ENCODE measurements at regions of chr11 and their contacts with region 1.

Region 1: GRCh38 chr11:65354265-65355012 is at the start of gene TIGD3:
- DNase-seq: peak; percentile 97 to 98 (median 97)
- ATAC-seq: peak; percentile 86 to 93 (median 90)
- H3K4me3 ChIP-seq: peak within 1 kb of the TSS; percentile 52 to 65 (median 64)
- H3K27ac ChIP-seq: peak within 1 kb of the TSS in 1 of 3 donors; percentile 18
- H3K4me1 ChIP-seq: peaks cover 0 to 35% (median 10%) of the 10 kb centered on the region in 4 donors
- H3K27me3 ChIP-seq: no peaks in the 10 kb centered on the region
- CTCF ChIP-seq: no peak
- POLR2A ChIP-seq: peak; percentile 71
- total RNA-seq, gene TIGD3: 0.10 to 0.28 (median 0.20) TPM in 3 of 6 experiments, not detected in the others

Region 2: DNA sequence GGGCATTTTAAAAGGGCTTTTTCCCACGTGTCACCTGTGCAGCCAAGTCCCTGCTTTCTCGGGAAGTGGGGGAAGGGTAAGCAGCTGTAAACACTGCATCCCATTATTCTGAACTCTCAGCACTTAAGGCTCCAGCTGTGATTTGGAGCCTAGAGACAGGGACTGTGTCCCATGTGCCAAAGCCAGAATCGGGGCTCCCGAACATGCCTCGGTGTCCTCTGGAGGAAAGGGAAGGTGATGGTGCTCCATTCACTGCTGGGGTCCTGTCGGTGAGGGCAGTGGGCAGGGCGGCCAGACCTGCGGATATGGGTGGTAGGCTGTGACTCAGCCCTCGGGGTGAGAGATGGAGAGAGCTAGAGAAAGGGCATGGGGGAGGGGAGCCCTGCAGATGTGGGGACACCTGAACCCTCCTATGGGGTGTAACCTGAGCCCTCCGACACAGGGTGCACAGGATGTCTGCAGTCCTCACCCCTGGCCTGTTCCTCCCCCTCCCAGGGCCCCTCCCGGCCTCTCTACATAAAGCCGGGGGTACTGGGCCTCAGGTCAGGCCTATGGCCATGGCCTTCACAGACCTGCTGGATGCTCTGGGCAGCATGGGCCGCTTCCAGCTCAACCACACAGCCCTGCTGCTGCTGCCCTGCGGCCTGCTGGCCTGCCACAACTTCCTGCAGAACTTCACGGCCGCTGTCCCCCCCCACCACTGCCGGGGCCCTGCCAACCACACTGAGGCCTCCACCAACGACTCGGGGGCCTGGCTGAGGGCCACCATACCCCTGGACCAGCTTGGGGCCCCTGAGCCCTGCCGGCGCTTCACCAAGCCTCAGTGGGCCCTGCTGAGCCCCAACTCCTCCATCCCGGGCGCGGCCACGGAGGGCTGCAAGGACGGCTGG is 140.9 kb before region 1 on chr11:
- intact Hi-C with region 1: no loop called
- DNase-seq: peak in 1 of 3 donors; percentile 47
- ATAC-seq: peak in 1 of 4 donors; percentile 7
- H3K4me3 ChIP-seq: no peak overlapping the region
- H3K27ac ChIP-seq: no peak overlapping the region
- H3K4me1 ChIP-seq: peaks cover 0 to 28% (median 10%) of the 10 kb centered on the region in 4 donors
- H3K27me3 ChIP-seq: no peaks in the 10 kb centered on the region
- CTCF ChIP-seq: no peak
- POLR2A ChIP-seq: no peak

Region 3: DNA sequence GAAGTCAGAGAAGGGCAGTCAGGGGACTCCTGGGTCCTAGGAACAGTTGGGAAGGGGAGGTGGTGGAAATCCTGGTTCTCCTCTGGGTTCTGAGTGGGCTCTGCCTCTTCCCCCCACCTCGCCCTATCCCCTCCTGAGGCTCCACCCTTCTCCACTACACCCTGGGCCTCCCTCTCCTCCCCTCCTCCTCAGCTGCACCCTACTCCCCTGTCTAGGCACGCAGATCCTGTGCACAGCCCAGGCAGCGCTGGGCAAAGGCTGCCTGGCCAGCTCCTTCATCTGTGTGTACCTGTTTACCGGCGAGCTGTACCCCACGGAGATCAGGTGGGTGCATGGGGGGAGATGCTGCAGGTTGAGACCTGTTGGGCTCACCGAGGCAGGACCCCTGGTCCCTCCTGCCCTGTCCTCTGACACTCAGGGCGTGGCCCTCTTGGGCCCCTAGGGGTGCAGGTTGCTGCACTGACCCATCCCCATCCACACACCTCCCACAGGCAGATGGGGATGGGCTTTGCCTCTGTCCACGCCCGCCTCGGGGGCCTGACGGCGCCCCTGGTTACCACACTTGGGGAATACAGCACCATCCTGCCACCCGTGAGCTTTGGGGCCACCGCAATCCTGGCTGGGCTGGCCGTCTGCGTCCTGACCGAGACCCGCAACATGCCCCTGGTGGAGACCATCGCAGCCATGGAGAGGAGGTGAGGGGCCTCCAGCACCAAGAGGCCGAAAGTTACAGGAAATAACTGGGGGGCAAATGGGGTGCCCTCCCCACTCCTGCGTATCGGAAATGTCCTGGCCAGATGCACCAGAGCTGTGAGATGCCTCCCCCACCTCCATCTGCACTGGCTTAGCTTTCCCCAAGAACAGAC is 118.0 kb before region 1 on chr11:
- intact Hi-C with region 1: no loop called
- DNase-seq: peak in 1 of 3 donors; percentile 19
- ATAC-seq: peak in 1 of 4 donors; percentile 40
- H3K4me3 ChIP-seq: no peak overlapping the region
- H3K27ac ChIP-seq: no peak overlapping the region
- H3K4me1 ChIP-seq: no peaks in the 10 kb centered on the region
- H3K27me3 ChIP-seq: no peaks in the 10 kb centered on the region
- CTCF ChIP-seq: no peak
- POLR2A ChIP-seq: no peak

Region 4: GRCh38 chr11:65391007-65391406 is 36.6 kb after region 1 on chr11:
- intact Hi-C with region 1: loop called in 1 of 2 experiments (anchors 5 kb)
- DNase-seq: peak in 1 of 3 donors; percentile 54
- ATAC-seq: peak; percentile 31 to 61 (median 36)
- H3K4me3 ChIP-seq: no peak overlapping the region
- H3K27ac ChIP-seq: peak overlapping the region; percentile 31 to 59 (median 47)
- H3K4me1 ChIP-seq: peaks cover 0 to 13% (median 4%) of the 10 kb centered on the region in 4 donors
- H3K27me3 ChIP-seq: no peaks in the 10 kb centered on the region
- CTCF ChIP-seq: no peak
- POLR2A ChIP-seq: no peak

Measured in right lobe of liver (tissue), 6 donors.